HepG2 (cell line): ENCODE measurements at regions of chr2 and their contacts with region 1.

Region 1: GRCh38 chr2:181943375-181944124 is 42.1 kb upstream of the PPP1R1C start:
- DNase-seq: no peak
- ATAC-seq: no peak
- H3K4me3 ChIP-seq: peak overlapping the region in 2 of 3 experiments; percentile 25 to 26; a peak in 3 of 6 replicates
- H3K27ac ChIP-seq: peak overlapping the region; percentile 66
- H3K4me1 ChIP-seq: peaks cover 45% of the 10 kb centered on the region
- H3K27me3 ChIP-seq: no peaks in the 10 kb centered on the region
- CTCF ChIP-seq: no peak
- EP300 ChIP-seq: 0 out of 4 replicates have a peak, but pooled peaks of 1 of the 2 experiments have one; percentile 2
- POLR2A ChIP-seq: no peak
- RAD21 ChIP-seq: no peak

Region 2: GRCh38 chr2:181904022-181904632 is 39.4 kb before region 1 on chr2:
- CTCF ChIA-PET with region 1: no interaction called
- POLR2A ChIA-PET with region 1: no interaction called
- in situ Hi-C with region 1: no loop called
- intact Hi-C with region 1: loop called (anchors 2 kb)
- DNase-seq: peak; percentile 66
- ATAC-seq: peak; percentile 72
- H3K4me3 ChIP-seq: no peak overlapping the region
- H3K27ac ChIP-seq: no peak overlapping the region
- H3K4me1 ChIP-seq: peaks cover 47% of the 10 kb centered on the region
- H3K27me3 ChIP-seq: no peaks in the 10 kb centered on the region
- CTCF ChIP-seq: peak; percentile 63
- EP300 ChIP-seq: no peak
- POLR2A ChIP-seq: no peak
- RAD21 ChIP-seq: peak; percentile 31; the same call in 1 of the 2 replicates